Stomach (tissue), 19 donors: ENCODE measurements at regions of chr7 and their contacts with region 1.

Region 1: GRCh38 chr7:30173058-30173897 is 38.5 kb downstream of the MTURN start:
- DNase-seq: peak; percentile 46 to 76
- H3K4me3 ChIP-seq: no peak overlapping the region
- H3K27ac ChIP-seq: peak overlapping the region; percentile 12 to 83 (median 72)
- H3K4me1 ChIP-seq: peaks cover 15 to 82% (median 44%) of the 10 kb centered on the region in 4 donors
- H3K27me3 ChIP-seq: no peaks in the 10 kb centered on the region
- CTCF ChIP-seq: no peak
- EP300 ChIP-seq: no peak
- POLR2A ChIP-seq: no peak

Region 2: DNA sequence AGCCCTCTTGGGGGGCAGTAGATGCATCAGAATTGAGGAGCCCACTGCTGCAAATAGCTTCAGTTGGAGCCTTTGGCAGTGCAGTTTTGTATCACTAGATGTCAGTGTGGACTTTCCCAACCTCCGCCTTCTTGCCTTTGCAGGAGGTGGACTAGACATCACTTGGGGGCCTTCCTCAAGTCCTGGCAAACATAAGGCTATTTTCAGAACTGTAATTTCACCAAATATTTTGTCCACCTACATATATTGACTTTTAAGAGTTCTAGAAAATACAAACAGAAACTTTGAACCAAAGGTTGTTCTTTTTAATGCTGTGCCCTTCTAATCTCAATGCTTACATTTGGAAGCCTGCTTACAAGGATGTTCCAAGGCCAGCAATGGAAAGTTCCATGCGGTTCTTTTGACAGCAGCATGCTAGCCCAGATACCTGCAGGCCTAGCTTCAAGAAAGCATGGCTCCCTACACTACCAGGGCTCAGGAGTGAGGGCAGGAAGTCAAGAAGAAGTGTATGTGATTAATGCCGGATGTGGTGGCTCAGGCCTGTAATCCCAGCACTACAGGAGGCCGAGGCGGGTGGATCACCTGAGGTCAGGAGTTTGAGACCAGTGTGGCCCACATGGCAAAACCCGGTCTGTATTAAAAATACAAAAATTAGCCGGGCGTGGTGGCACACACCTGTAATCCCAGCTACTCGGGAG is 103.1 kb after region 1 on chr7:
- intact Hi-C with region 1: loop called (anchors 10 kb)
- DNase-seq: peak; percentile 39 to 79
- H3K4me3 ChIP-seq: no peak overlapping the region
- H3K27ac ChIP-seq: no peak overlapping the region
- H3K4me1 ChIP-seq: peaks cover 4 to 37% (median 15%) of the 10 kb centered on the region in 4 donors
- H3K27me3 ChIP-seq: no peaks in the 10 kb centered on the region
- CTCF ChIP-seq: peak in 5 of 7 experiments; percentile 50 to 63 (median 56)
- EP300 ChIP-seq: no peak
- POLR2A ChIP-seq: no peak

Region 3: GRCh38 chr7:30330134-30331111 is 157.1 kb after region 1 on chr7:
- intact Hi-C with region 1: no loop called
- DNase-seq: peak in 1 of 2 donors; percentile 53
- H3K4me3 ChIP-seq: no peak overlapping the region
- H3K27ac ChIP-seq: peak overlapping the region in 2 of 5 donors; percentile 9 to 38
- H3K4me1 ChIP-seq: peaks cover 0 to 51% (median 28%) of the 10 kb centered on the region in 4 donors
- H3K27me3 ChIP-seq: no peaks in the 10 kb centered on the region
- CTCF ChIP-seq: no peak
- EP300 ChIP-seq: no peak
- POLR2A ChIP-seq: no peak